OCI-LY7 (cell line): ENCODE measurements at regions of chr15 and their contacts with region 1.

Region 1: GRCh38 chr15:55649054-55649423 is 60.9 kb upstream of the PYGO1 start:
- DNase-seq: no peak
- H3K4me3 ChIP-seq: no peak overlapping the region
- H3K27ac ChIP-seq: no peak overlapping the region
- H3K4me1 ChIP-seq: no peaks in the 10 kb centered on the region
- CTCF ChIP-seq: no peak

Region 2: GRCh38 chr15:55799291-55800212 is 150.5 kb after region 1 on chr15:
- CTCF ChIA-PET with region 1: no interaction called
- POLR2A ChIA-PET with region 1: no interaction called
- intact Hi-C with region 1: loop called (anchors 5 kb)
- DNase-seq: peak; percentile 37
- H3K4me3 ChIP-seq: no peak overlapping the region
- H3K27ac ChIP-seq: no peak overlapping the region
- H3K4me1 ChIP-seq: no peaks in the 10 kb centered on the region
- CTCF ChIP-seq: peak; percentile 78

Region 3: DNA sequence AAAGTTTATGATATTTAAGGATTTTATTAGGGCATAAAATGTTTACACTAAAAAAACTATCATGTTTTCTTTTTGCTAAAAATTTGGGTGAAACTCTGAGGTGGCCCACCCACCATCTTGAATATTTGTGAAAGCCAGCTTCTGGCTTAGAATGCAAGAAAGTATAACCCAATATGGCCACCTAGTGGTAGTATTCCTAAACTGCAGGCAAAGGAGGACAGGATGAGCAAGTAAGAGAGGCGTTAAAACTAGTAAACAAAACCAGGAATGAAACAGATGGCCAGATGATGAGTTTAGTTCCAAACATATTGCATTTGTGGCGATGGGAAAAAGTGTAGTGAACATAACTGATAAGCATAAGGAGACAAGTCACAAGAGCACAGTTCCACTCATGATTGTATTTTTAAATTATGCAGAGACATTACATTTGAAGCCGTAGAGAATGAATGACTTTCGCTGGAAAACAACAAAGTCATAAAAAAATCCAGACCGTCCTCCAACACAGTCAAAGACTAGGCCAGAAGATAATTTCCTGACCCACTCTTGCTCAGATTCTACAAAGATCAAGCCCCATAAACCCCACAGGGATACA is 197.2 kb after region 1 on chr15:
- CTCF ChIA-PET with region 1: no interaction called
- POLR2A ChIA-PET with region 1: interaction called, 3 read pairs
- intact Hi-C with region 1: loop called (anchors 1 kb)
- DNase-seq: peak; percentile 71
- H3K4me3 ChIP-seq: no peak overlapping the region
- H3K27ac ChIP-seq: no peak overlapping the region
- H3K4me1 ChIP-seq: no peaks in the 10 kb centered on the region
- CTCF ChIP-seq: peak; percentile 95

Region 4: GRCh38 chr15:56052395-56053045 is 403.5 kb after region 1 on chr15:
- CTCF ChIA-PET with region 1: no interaction called
- POLR2A ChIA-PET with region 1: no interaction called
- intact Hi-C with region 1: loop called (anchors 2 kb)
- DNase-seq: peak; percentile 60
- H3K4me3 ChIP-seq: no peak overlapping the region
- H3K27ac ChIP-seq: no peak overlapping the region
- H3K4me1 ChIP-seq: no peaks in the 10 kb centered on the region
- CTCF ChIP-seq: peak; percentile 93

Region 5: GRCh38 chr15:56064152-56064551 is 415.1 kb after region 1 on chr15:
- CTCF ChIA-PET with region 1: no interaction called
- POLR2A ChIA-PET with region 1: no interaction called
- intact Hi-C with region 1: no loop called
- DNase-seq: no peak
- H3K4me3 ChIP-seq: no peak overlapping the region
- H3K27ac ChIP-seq: no peak overlapping the region
- H3K4me1 ChIP-seq: no peaks in the 10 kb centered on the region
- CTCF ChIP-seq: no peak